CD8-positive, alpha-beta T cell (primary cell): ENCODE measurements at regions of chr14 and their contacts with region 1.

Region 1: DNA sequence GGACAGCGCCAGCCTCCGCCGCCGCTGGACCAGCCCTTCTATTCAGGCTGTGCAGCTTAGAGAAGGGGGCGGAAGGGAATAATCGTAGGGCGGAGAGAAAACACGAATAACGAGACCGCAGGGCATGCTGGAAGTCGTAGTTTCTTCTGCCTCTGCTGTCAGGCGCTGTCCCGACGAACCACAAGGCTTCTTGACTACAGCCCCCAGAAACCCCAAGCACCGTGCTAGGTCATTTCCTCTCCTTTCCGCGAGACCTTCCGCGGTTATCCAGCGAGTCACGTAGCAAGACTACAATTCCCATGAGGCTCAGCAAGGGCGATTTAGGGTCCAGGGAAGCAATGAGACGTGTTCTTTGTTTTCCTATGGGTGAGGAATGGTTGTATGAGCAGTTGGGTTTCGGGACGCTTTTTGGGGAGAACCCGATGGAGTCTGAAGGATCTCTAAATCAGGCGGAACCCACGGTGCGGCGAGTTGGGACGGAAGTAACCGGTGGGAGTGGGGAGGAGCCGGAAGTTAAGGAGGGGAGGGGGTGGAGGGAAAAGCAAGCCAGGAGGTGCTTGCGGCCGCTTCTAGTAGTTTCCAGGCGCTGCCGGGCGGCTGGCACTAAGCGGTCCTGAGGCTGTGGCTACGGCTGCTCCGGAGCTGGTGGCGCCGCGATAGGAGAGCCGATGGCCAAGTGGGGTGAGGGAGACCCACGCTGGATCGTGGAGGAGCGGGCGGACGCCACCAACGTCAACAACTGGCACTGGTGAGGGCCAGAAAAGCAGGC is at the starts of genes AHSA1 and VIPAS39:
- DNase-seq: peak; percentile 84 to 99 (median 93)
- ATAC-seq: peak; percentile 94
- H3K4me3 ChIP-seq: peak within 1 kb of the TSS; percentile 95 to 99
- H3K4me3 Mint-ChIP-seq: peak within 1 kb of the TSS; percentile 100
- H3K27ac ChIP-seq: peak within 1 kb of the TSS; percentile 72 to 96
- H3K27ac Mint-ChIP-seq: peak within 1 kb of the TSS; percentile 99
- H3K4me1 ChIP-seq: peaks cover 24% of the 10 kb centered on the region
- H3K4me1 Mint-ChIP-seq: peaks cover 62% of the 10 kb centered on the region
- H3K27me3 ChIP-seq: no peaks in the 10 kb centered on the region
- H3K27me3 Mint-ChIP-seq: no peaks in the 10 kb centered on the region
- CTCF ChIP-seq: no peak
- total RNA-seq, gene AHSA1: 37.0 to 43.5 TPM
- total RNA-seq, gene VIPAS39: 7.2 to 8.1 TPM

Region 2: DNA sequence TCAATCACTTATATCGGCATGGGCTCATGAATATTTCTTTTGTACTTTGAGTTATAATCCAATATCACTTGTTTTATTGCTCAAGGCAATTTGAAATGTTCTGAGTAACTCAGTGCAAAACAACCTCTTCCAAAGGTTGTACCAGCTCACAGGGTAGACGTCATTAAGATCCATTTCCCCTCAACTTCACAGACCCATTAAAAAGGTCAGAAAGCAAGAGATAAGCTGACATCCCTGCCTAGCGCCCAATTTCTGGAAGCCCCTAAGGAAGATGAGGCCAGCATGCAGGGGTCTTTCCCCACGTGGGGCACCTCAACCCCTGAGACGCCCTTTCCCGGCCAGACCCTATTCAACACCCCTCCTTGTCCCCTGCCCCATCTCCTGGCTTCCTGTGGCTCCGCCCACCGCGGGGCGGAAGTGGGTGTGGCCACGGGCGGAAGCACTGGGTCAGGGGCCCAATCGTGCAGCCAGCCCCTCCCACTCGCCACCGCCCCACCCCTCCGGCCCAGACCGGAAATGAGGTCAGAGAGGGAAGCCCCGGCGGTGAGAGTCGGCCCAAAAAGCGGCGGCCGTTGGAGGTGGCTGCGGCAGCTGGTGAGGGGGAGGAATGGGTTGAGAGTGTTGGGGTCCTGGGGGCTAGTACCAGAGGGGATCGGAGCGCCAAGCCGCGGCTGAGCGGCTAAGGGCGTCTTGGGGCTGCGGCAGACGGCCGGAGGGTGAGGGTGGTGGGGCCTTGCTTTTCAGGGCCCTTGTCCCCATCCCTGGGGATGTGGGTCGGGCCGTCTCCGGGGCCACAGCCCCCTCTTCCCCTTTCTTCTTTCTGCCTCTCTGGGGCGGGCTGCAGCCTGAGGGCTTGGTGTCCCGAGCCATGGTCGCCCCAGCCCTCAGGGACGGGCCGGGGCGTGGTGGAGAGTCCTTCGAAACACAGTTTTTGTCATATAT is 1306.0 kb before region 1 on chr14 and contains the start of gene GPATCH2L:
- CTCF ChIA-PET with region 1: no interaction called
- POLR2A ChIA-PET with region 1: no interaction called
- intact Hi-C with region 1: loop called (anchors 5 kb)
- DNase-seq: peak; percentile 95 to 98 (median 97)
- ATAC-seq: peak; percentile 87
- H3K4me3 ChIP-seq: peak within 1 kb of the TSS; percentile 86 to 99
- H3K4me3 Mint-ChIP-seq: peak within 1 kb of the TSS; percentile 93
- H3K27ac ChIP-seq: peak within 1 kb of the TSS; percentile 85 to 98
- H3K27ac Mint-ChIP-seq: peak within 1 kb of the TSS; percentile 95
- H3K4me1 ChIP-seq: peaks cover 47% of the 10 kb centered on the region
- H3K4me1 Mint-ChIP-seq: peaks cover 54% of the 10 kb centered on the region
- H3K27me3 ChIP-seq: no peaks in the 10 kb centered on the region
- H3K27me3 Mint-ChIP-seq: no peaks in the 10 kb centered on the region
- CTCF ChIP-seq: no peak
- total RNA-seq, gene GPATCH2L: 74.4 to 78.1 TPM

Region 3: GRCh38 chr14:76844223-76844622 is 613.5 kb before region 1 on chr14:
- CTCF ChIA-PET with region 1: no interaction called
- POLR2A ChIA-PET with region 1: no interaction called
- intact Hi-C with region 1: no loop called
- DNase-seq: peak; percentile 15 to 74 (median 54)
- ATAC-seq: peak; percentile 99
- H3K4me3 ChIP-seq: peak overlapping the region in 1 of 2 experiments; percentile 10
- H3K4me3 Mint-ChIP-seq: peak overlapping the region; percentile 52
- H3K27ac ChIP-seq: no peak overlapping the region
- H3K27ac Mint-ChIP-seq: no peak overlapping the region
- H3K4me1 ChIP-seq: peaks cover 5% of the 10 kb centered on the region
- H3K4me1 Mint-ChIP-seq: peaks cover 8% of the 10 kb centered on the region
- H3K27me3 ChIP-seq: peaks cover 0 to 2% of the 10 kb centered on the region in 2 experiments
- H3K27me3 Mint-ChIP-seq: peaks cover 19% of the 10 kb centered on the region
- CTCF ChIP-seq: peak; percentile 38

Region 4: GRCh38 chr14:77320238-77320935 is 137.3 kb before region 1 on chr14 and contains the start of gene POMT2:
- CTCF ChIA-PET with region 1: interaction called, 7 read pairs
- POLR2A ChIA-PET with region 1: interaction called, 12 read pairs
- intact Hi-C with region 1: loop called (anchors 1 kb)
- DNase-seq: peak; percentile 85 to 95 (median 91)
- ATAC-seq: peak; percentile 49
- H3K4me3 ChIP-seq: peak within 1 kb of the TSS; percentile 89 to 100
- H3K4me3 Mint-ChIP-seq: peak within 1 kb of the TSS; percentile 99
- H3K27ac ChIP-seq: peak within 1 kb of the TSS; percentile 90 to 97
- H3K27ac Mint-ChIP-seq: peak within 1 kb of the TSS; percentile 98
- H3K4me1 ChIP-seq: peaks cover 12% of the 10 kb centered on the region
- H3K4me1 Mint-ChIP-seq: peaks cover 20% of the 10 kb centered on the region
- H3K27me3 ChIP-seq: no peaks in the 10 kb centered on the region
- H3K27me3 Mint-ChIP-seq: no peaks in the 10 kb centered on the region
- CTCF ChIP-seq: no peak
- total RNA-seq, gene POMT2: 8.4 to 9.6 TPM

Region 5: GRCh38 chr14:77482422-77482821 is 24.7 kb after region 1 on chr14:
- CTCF ChIA-PET with region 1: no interaction called
- POLR2A ChIA-PET with region 1: no interaction called
- intact Hi-C with region 1: no loop called
- DNase-seq: no peak
- ATAC-seq: no peak
- H3K4me3 ChIP-seq: no peak overlapping the region
- H3K4me3 Mint-ChIP-seq: no peak overlapping the region
- H3K27ac ChIP-seq: no peak overlapping the region
- H3K27ac Mint-ChIP-seq: no peak overlapping the region
- H3K4me1 ChIP-seq: no peaks in the 10 kb centered on the region
- H3K4me1 Mint-ChIP-seq: no peaks in the 10 kb centered on the region
- H3K27me3 ChIP-seq: no peaks in the 10 kb centered on the region
- H3K27me3 Mint-ChIP-seq: no peaks in the 10 kb centered on the region
- CTCF ChIP-seq: no peak

Region 6: GRCh38 chr14:77554207-77554606 is 96.5 kb after region 1 on chr14:
- CTCF ChIA-PET with region 1: interaction called, 3 read pairs
- POLR2A ChIA-PET with region 1: no interaction called
- intact Hi-C with region 1: loop called in 1 of 2 experiments (anchors 5 kb)
- DNase-seq: peak in 1 of 9 experiments; percentile 14
- ATAC-seq: no peak
- H3K4me3 ChIP-seq: no peak overlapping the region
- H3K4me3 Mint-ChIP-seq: no peak overlapping the region
- H3K27ac ChIP-seq: peak overlapping the region in 1 of 2 experiments; percentile 2
- H3K27ac Mint-ChIP-seq: peak overlapping the region; percentile 43
- H3K4me1 ChIP-seq: no peaks in the 10 kb centered on the region
- H3K4me1 Mint-ChIP-seq: peaks cover 2% of the 10 kb centered on the region
- H3K27me3 ChIP-seq: no peaks in the 10 kb centered on the region
- H3K27me3 Mint-ChIP-seq: no peaks in the 10 kb centered on the region
- CTCF ChIP-seq: no peak

Region 7: GRCh38 chr14:77616454-77617229 is 158.9 kb after region 1 on chr14 and contains the start of gene SPTLC2:
- CTCF ChIA-PET with region 1: interaction called, 3 read pairs
- POLR2A ChIA-PET with region 1: no interaction called
- intact Hi-C with region 1: loop called (anchors 1 kb)
- DNase-seq: peak; percentile 92 to 99 (median 97)
- ATAC-seq: peak; percentile 96
- H3K4me3 ChIP-seq: peak within 1 kb of the TSS; percentile 75
- H3K4me3 Mint-ChIP-seq: peak within 1 kb of the TSS; percentile 90
- H3K27ac ChIP-seq: peak within 1 kb of the TSS; percentile 58 to 69
- H3K27ac Mint-ChIP-seq: peak within 1 kb of the TSS; percentile 87
- H3K4me1 ChIP-seq: peaks cover 12% of the 10 kb centered on the region
- H3K4me1 Mint-ChIP-seq: peaks cover 40% of the 10 kb centered on the region
- H3K27me3 ChIP-seq: no peaks in the 10 kb centered on the region
- H3K27me3 Mint-ChIP-seq: no peaks in the 10 kb centered on the region
- CTCF ChIP-seq: no peak
- total RNA-seq, gene SPTLC2: 14.4 to 15.8 TPM

Region 8: DNA sequence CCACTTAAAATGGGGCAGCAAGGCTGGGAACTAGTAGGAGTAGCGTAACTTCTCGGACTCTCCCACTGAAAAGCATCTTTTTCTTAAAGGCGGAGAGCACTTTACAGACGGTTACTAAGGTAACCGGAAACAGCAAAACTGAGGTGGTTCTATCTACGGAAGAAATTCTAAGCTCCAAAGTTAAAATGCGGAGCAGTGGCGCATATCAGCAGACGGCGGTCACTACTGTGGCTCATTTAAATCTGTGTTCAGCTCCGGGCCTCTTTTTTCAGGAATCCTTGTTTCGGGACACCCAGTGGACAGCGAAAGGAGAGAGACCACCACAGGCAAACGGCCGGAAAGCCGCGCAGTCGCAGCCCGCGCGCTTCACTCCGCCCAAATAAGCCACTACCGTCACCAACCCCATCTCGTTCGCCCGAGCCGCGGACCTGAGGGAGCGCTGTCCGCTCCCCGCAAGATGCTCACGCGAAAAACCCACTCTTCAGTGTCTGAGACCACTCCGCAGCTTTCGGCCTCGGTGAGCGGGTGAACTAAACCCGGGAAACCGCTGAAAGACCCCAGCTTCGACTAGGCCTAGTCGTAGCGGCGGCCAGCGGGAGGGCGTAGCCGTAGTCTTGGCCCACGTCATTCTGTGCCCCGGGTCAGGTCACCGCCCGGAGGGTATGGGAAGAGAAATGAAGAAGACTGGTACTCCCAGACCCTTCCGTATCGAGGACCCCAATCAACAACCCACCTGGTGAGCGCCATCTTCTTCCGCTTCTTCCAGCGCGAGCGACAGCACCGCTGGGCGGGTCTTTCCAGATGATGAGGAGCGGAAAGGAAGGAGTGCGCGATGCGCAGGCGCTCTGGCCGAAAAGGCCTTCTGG is 302.9 kb after region 1 on chr14 and contains the start of gene SNW1:
- CTCF ChIA-PET with region 1: no interaction called
- POLR2A ChIA-PET with region 1: no interaction called
- intact Hi-C with region 1: loop called (anchors 1 kb)
- DNase-seq: peak; percentile 78 to 97 (median 89)
- ATAC-seq: peak; percentile 91
- H3K4me3 ChIP-seq: peak within 1 kb of the TSS; percentile 78 to 90
- H3K4me3 Mint-ChIP-seq: peak within 1 kb of the TSS; percentile 96
- H3K27ac ChIP-seq: peak within 1 kb of the TSS; percentile 97 to 99
- H3K27ac Mint-ChIP-seq: peak within 1 kb of the TSS; percentile 98
- H3K4me1 ChIP-seq: peaks cover 34% of the 10 kb centered on the region
- H3K4me1 Mint-ChIP-seq: peaks cover 50% of the 10 kb centered on the region
- H3K27me3 ChIP-seq: no peaks in the 10 kb centered on the region
- H3K27me3 Mint-ChIP-seq: no peaks in the 10 kb centered on the region
- CTCF ChIP-seq: no peak
- total RNA-seq, gene SNW1: 115 to 124 TPM